WTC11 (cell line): ENCODE measurements at regions of chr9 and their contacts with region 1.

Region 1: GRCh38 chr9:20684035-20684872 is at the start of gene FOCAD:
- DNase-seq: peak; percentile 98
- ATAC-seq: peak; percentile 98
- H3K4me3 Mint-ChIP-seq: peak within 1 kb of the TSS; percentile 76
- H3K27ac Mint-ChIP-seq: peak within 1 kb of the TSS; percentile 92
- H3K4me1 Mint-ChIP-seq: peaks cover 17% of the 10 kb centered on the region
- H3K27me3 Mint-ChIP-seq: no peaks in the 10 kb centered on the region
- CTCF ChIP-seq: no peak
- total RNA-seq, gene FOCAD: 34.3 to 37.1 TPM (median 36.3 TPM) in 3 replicates

Region 2: DNA sequence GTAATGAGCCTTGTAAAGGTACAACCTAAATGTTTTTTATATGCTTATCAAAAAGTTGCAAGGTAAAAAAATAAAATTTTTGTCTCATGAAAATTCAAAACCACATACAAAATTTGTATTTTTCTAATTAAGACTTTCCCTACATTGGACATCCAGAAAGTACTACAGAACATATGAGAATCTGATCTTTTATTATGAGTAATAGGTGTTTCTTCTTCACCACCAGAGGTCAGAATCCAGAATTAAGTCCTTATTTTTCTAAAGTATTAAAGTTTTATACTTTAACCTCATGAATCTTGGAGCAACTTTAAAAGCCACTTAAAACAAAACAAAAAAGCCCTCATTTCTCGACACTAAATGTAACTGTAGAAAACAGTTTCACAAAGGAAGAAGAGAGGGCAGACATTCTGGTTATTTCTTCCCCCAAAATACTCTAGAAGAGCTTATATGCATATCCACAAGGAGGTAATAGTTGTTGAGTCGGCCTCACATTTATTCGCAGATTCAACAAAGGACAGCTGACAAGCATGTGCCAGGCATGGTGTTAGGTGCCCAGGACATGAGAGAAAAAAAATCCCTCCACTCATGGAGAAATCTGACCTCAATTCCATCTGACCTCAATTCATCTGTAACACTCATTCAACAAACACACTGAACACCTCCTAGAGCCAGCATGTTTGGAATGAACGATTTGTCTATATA is 131.2 kb before region 1 on chr9:
- CTCF ChIA-PET with region 1: no interaction called
- POLR2A ChIA-PET with region 1: no interaction called
- DNase-seq: no peak
- ATAC-seq: no peak
- H3K4me3 Mint-ChIP-seq: no peak overlapping the region
- H3K27ac Mint-ChIP-seq: no peak overlapping the region
- H3K4me1 Mint-ChIP-seq: peaks cover 37% of the 10 kb centered on the region
- H3K27me3 Mint-ChIP-seq: no peaks in the 10 kb centered on the region
- CTCF ChIP-seq: no peak

Region 3: DNA sequence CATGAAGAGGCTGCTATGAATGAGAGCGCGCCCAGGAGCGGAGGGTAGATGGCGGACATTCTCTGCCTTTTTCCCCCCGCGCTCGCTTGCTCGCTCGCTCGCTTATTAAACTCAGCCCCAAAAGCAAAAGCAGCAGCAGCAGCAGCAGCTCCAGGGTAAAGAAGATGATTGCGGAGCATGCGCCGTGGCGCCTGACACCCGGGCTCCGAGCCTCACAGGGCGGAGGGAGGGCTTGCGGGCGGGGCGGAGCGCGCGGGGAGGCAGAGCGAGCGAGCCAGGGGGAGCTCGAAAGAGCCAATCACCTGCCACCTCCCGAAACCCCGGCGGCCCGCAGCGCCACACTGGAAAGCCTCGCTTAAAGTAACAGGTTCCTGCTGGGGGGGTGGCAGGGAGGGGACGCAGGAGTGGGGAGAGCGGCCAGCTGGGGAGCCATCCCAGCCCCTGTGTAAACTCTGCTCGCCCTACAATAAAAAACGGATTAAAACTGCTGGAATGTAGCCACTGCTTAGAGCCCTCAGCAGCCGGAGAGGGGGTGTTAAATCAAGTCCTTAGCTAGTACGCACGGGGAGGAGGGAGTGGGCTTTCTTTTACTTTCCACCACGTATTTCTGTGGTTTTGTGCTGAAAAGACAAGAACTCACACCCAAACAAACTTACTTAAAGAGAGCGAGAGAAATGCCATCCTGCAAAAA is 61.8 kb before region 1 on chr9 and contains the start of gene MLLT3:
- CTCF ChIA-PET with region 1: interaction called, 14 read pairs
- POLR2A ChIA-PET with region 1: interaction called, 10 read pairs
- DNase-seq: peak; percentile 94
- ATAC-seq: peak; percentile 87
- H3K4me3 Mint-ChIP-seq: peak within 1 kb of the TSS; percentile 73
- H3K27ac Mint-ChIP-seq: no peak within 1 kb of the TSS
- H3K4me1 Mint-ChIP-seq: peaks cover 29% of the 10 kb centered on the region
- H3K27me3 Mint-ChIP-seq: peaks cover 62% of the 10 kb centered on the region
- CTCF ChIP-seq: no peak
- total RNA-seq, gene MLLT3: 7.0 to 11.6 TPM (median 10.0 TPM) in 3 replicates